ENCODE measurements at regions of chr2 and their contacts with region 1.

Region 1: GRCh38 chr2:101697124-101698013 is at the start of gene MAP4K4:
- DNase-seq: peak; percentile 89 to 93 (median 90)
- ATAC-seq: peak; percentile 85 to 91 (median 86)
- H3K4me3 ChIP-seq: peak within 1 kb of the TSS; percentile 62 to 88 (median 72)
- H3K27ac ChIP-seq: peak within 1 kb of the TSS; percentile 64 to 95 (median 92)
- H3K4me1 ChIP-seq: peaks cover 0 to 42% (median 25%) of the 10 kb centered on the region in 12 donors
- H3K27me3 ChIP-seq: no peaks in the 10 kb centered on the region
- CTCF ChIP-seq: peak in 11 of 12 donors; percentile 15 to 63 (median 38)
- POLR2A ChIP-seq: peak in 1 of 2 donors; percentile 54
- total RNA-seq, gene MAP4K4: 65.3 to 146 (median 114) TPM

Region 2: DNA sequence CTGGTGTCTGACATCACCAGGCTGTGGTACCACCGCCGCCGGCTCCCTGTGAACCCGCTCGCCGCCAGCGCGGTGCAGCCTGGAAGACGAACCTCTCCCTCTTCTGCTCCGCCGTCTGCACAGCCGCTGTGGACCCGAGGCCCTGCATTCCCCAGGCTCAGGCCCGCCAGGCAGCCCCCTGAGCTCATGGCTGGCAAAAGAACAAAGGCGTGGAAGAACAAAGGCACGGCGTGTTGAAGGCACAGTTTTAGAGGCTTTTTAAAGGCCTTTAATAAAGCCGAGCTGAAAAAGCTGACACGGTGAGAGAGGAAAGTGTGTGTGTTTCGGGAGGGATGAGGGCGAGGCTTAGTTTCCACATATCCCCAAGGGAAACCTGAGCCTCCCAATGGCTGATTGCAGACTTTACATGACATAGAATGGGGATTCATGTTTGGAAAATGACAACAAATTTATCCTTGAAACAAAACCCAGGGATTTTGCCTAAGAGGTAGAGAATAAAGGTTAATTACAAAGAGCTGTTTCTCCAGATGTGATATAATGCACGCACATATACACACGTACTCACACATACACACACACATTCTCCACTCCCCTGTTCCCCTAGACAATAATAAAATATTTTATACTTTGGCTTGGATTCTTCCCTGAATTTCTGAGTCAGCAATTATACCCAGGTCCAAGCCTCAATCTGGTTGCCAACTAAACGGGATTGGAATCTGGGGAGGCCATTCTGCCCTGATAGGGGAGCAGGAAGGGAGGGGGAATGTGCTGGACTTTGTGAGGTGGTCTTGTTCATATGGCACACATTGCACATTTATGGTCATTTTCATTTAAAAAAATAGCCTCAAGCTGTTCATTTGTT is 262.1 kb before region 1 on chr2:
- intact Hi-C with region 1: loop called in 2 of 10 experiments (anchors 10 kb)
- DNase-seq: peak in 2 of 5 donors; percentile 49 to 51
- ATAC-seq: peak; percentile 33 to 56 (median 52)
- H3K4me3 ChIP-seq: peak overlapping the region in 9 of 12 donors; percentile 4 to 43 (median 27)
- H3K27ac ChIP-seq: peak overlapping the region in 5 of 12 donors; percentile 3 to 47 (median 11)
- H3K4me1 ChIP-seq: peaks cover 0 to 28% (median 6%) of the 10 kb centered on the region in 12 donors
- H3K27me3 ChIP-seq: no peaks in the 10 kb centered on the region
- CTCF ChIP-seq: no peak
- POLR2A ChIP-seq: no peak

Region 3: GRCh38 chr2:101558740-101559519 is 138.4 kb before region 1 on chr2:
- intact Hi-C with region 1: loop called in 1 of 10 experiments (anchors 2 kb)
- DNase-seq: peak in 2 of 5 donors; percentile 32 to 44
- ATAC-seq: peak; percentile 66 to 87 (median 84)
- H3K4me3 ChIP-seq: peak overlapping the region in 7 of 12 donors; percentile 0 to 20 (median 1)
- H3K27ac ChIP-seq: peak overlapping the region; percentile 58 to 89 (median 80)
- H3K4me1 ChIP-seq: peaks cover 0 to 21% (median 13%) of the 10 kb centered on the region in 12 donors
- H3K27me3 ChIP-seq: no peaks in the 10 kb centered on the region
- CTCF ChIP-seq: no peak
- POLR2A ChIP-seq: no peak

Region 4: GRCh38 chr2:101751875-101752619 is 54.7 kb after region 1 on chr2:
- intact Hi-C with region 1: loop called in 3 of 10 experiments (anchors 5 to 10 kb)
- DNase-seq: no peak
- ATAC-seq: peak in 3 of 4 donors; percentile 19 to 38 (median 20)
- H3K4me3 ChIP-seq: no peak overlapping the region
- H3K27ac ChIP-seq: peak overlapping the region in 6 of 12 donors; percentile 4 to 55 (median 20)
- H3K4me1 ChIP-seq: peaks cover 18 to 79% (median 69%) of the 10 kb centered on the region in 12 donors
- H3K27me3 ChIP-seq: no peaks in the 10 kb centered on the region
- CTCF ChIP-seq: no peak
- POLR2A ChIP-seq: no peak

Region 5: DNA sequence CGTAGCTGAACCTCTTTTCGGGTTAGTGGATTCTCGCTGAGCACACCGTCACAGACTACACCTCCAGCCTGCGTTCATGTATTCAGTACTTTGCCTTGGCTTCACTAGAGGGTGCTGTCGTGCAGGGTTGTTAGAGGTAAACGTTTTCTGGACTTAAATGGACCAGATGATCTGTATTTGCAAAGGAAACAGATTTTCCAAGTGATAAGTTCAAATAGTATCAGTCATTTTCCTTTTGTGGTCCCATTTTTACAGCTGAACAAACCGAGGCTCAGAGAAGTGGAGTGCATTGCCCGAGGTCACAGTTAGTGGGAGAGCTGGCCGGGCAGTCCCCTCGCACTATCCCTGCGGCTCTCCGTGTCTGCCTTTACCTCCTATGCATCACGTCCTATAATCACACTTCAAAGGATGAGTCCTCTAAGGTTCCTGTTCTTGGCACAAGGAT is 126.0 kb after region 1 on chr2:
- intact Hi-C with region 1: loop called in 3 of 10 experiments (anchors 5 kb)
- DNase-seq: peak in 4 of 5 donors; percentile 55 to 64 (median 58)
- ATAC-seq: peak in 3 of 4 donors; percentile 59 to 77 (median 66)
- H3K4me3 ChIP-seq: no peak overlapping the region
- H3K27ac ChIP-seq: peak overlapping the region in 2 of 12 donors; percentile 8 to 15
- H3K4me1 ChIP-seq: peaks cover 12 to 82% (median 60%) of the 10 kb centered on the region in 12 donors
- H3K27me3 ChIP-seq: no peaks in the 10 kb centered on the region
- CTCF ChIP-seq: peak; percentile 47 to 74 (median 61)
- POLR2A ChIP-seq: no peak

Measured in heart left ventricle (tissue), 16 donors.